T-cell (primary cell): ENCODE measurements at regions of chr19 and their contacts with region 1.

Region 1: GRCh38 chr19:18478569-18479311 is 40.8 kb upstream of the ISYNA1 start:
- DNase-seq: peak in 31 of 35 experiments; percentile 16 to 67 (median 34)
- ATAC-seq: peak; percentile 40 to 57 (median 47)
- H3K4me3 ChIP-seq: no peak overlapping the region
- H3K4me3 Mint-ChIP-seq: peak overlapping the region; percentile 34 to 73 (median 47)
- H3K27ac ChIP-seq: peak overlapping the region; percentile 75
- H3K27ac Mint-ChIP-seq: peak overlapping the region; percentile 89 to 92
- H3K4me1 ChIP-seq: peaks cover 0 to 87% of the 10 kb centered on the region in 2 experiments
- H3K4me1 Mint-ChIP-seq: peaks cover 63 to 95% (median 84%) of the 10 kb centered on the region in 3 donors
- H3K27me3 ChIP-seq: no peaks in the 10 kb centered on the region
- H3K27me3 Mint-ChIP-seq: no peaks in the 10 kb centered on the region

Region 2: GRCh38 chr19:18436671-18437490 is 41.9 kb before region 1 on chr19:
- CTCF ChIA-PET with region 1: no interaction called
- POLR2A ChIA-PET with region 1: no interaction called
- DNase-seq: peak; percentile 61 to 88 (median 75)
- ATAC-seq: peak; percentile 71 to 76 (median 74)
- H3K4me3 ChIP-seq: peak overlapping the region; percentile 49 to 69
- H3K4me3 Mint-ChIP-seq: peak overlapping the region; percentile 74 to 79 (median 78)
- H3K27ac ChIP-seq: no peak overlapping the region
- H3K27ac Mint-ChIP-seq: peak overlapping the region; percentile 16 to 36
- H3K4me1 ChIP-seq: peaks cover 2 to 68% of the 10 kb centered on the region in 2 experiments
- H3K4me1 Mint-ChIP-seq: peaks cover 30 to 46% (median 34%) of the 10 kb centered on the region in 3 donors
- H3K27me3 ChIP-seq: no peaks in the 10 kb centered on the region
- H3K27me3 Mint-ChIP-seq: no peaks in the 10 kb centered on the region

Region 3: DNA sequence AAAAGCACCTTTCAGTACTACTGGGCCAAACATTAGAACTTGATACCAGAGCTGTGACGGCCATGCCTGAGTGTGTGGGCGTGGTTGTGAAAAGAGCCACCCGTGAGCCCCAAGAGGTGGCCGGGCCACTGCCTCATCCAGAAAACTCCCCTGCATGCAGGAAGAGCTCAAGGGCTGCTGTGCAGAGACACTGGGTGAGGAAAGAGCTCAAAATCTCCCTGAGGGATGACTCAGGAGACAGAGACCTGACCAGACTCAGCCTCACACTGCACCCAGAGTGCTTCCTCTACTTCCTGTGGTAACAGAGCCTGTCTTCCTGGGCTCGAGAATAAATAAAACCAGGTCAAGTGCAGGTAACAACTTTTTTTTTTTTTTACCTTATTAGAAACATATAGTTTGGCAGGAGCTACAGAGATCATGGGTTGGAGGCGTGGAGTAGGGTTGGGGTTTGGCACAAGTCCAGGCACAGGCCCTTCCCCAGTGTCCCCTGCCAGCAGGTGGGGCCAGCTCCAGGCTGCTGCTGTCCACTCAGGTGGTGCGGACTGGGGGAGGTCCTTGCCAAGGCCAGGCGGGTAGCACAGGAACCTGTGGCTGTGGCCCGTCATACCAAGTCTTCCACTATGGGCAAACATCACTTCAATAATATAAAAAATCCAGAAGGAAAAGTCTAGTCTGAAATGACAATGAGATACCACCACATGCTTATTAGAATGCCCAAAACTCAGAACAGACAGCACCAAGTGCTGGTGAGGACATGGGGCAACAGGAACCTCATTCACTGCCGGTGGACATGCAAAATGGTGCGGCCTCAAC is 17.6 kb after region 1 on chr19:
- CTCF ChIA-PET with region 1: interaction called in 1 of 2 experiments, 5 read pairs
- POLR2A ChIA-PET with region 1: interaction called in 1 of 2 experiments, 11 read pairs
- DNase-seq: peak in 34 of 35 experiments; percentile 38 to 88 (median 60)
- ATAC-seq: peak; percentile 90 to 95 (median 92)
- H3K4me3 ChIP-seq: peak overlapping the region; percentile 26 to 27
- H3K4me3 Mint-ChIP-seq: peak overlapping the region; percentile 63 to 76 (median 65)
- H3K27ac ChIP-seq: peak overlapping the region; percentile 98
- H3K27ac Mint-ChIP-seq: peak overlapping the region; percentile 71 to 81
- H3K4me1 ChIP-seq: peaks cover 16 to 98% of the 10 kb centered on the region in 2 experiments
- H3K4me1 Mint-ChIP-seq: peaks cover 62 to 88% (median 85%) of the 10 kb centered on the region in 3 donors
- H3K27me3 ChIP-seq: no peaks in the 10 kb centered on the region
- H3K27me3 Mint-ChIP-seq: no peaks in the 10 kb centered on the region

Region 4: DNA sequence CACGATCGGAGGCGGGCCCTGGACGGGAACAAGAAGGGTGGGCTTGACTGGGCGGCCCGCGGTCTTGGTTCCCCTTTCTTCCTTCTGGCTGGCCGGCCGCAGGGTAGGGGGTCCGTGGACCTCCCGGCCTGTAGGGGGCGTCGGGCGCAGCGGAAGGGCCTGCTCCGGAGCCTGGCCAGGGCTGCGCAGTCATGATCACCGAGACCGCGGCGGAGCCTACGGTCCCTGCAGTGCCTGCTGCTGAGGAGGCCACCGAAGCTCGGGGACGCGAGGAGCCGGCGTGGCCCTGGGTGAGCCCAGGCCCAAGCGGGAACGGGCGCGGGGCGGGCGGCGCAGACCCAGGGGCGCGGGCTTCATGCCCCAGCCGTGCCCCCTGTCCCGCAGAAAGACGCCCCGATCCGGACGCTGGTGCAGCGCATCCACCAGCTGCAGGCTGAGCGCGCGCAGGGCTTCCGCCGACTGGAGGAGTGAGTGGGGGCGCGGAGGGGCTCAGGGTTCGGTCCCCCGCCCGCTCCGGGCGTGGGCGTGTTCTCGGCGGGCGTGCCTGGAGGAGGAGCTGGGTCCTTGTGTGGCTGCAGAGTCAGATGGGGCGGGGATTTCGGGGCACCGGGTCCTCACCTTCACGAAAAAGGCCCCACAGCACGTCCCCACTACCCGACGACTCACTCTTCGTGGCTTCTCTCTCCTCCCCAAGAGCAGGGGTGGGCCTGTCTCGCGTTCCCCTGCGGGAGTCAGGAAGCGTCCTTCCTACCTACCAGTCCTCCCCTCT is 110.1 kb after region 1 on chr19 and contains the start of gene REX1BD:
- CTCF ChIA-PET with region 1: no interaction called
- POLR2A ChIA-PET with region 1: interaction called in 1 of 2 experiments, 14 read pairs
- DNase-seq: peak; percentile 73 to 91 (median 86)
- ATAC-seq: peak; percentile 81 to 85 (median 82)
- H3K4me3 ChIP-seq: peak within 1 kb of the TSS; percentile 77 to 78
- H3K4me3 Mint-ChIP-seq: peak within 1 kb of the TSS; percentile 79 to 88 (median 80)
- H3K27ac ChIP-seq: peak within 1 kb of the TSS; percentile 93
- H3K27ac Mint-ChIP-seq: peak within 1 kb of the TSS; percentile 93 to 95
- H3K4me1 ChIP-seq: peaks cover 16 to 46% of the 10 kb centered on the region in 2 experiments
- H3K4me1 Mint-ChIP-seq: peaks cover 35 to 46% (median 37%) of the 10 kb centered on the region in 3 donors
- H3K27me3 ChIP-seq: no peaks in the 10 kb centered on the region
- H3K27me3 Mint-ChIP-seq: no peaks in the 10 kb centered on the region
- total RNA-seq, gene REX1BD: 91.8 to 166 (median 150) TPM

Region 5: GRCh38 chr19:18603255-18603957 is 124.7 kb after region 1 on chr19:
- CTCF ChIA-PET with region 1: no interaction called
- POLR2A ChIA-PET with region 1: no interaction called
- DNase-seq: peak in 2 of 35 experiments; percentile 19 to 45
- ATAC-seq: peak; percentile 41 to 75 (median 46)
- H3K4me3 ChIP-seq: no peak overlapping the region
- H3K4me3 Mint-ChIP-seq: peak overlapping the region in 1 of 3 donors; percentile 9
- H3K27ac ChIP-seq: no peak overlapping the region
- H3K27ac Mint-ChIP-seq: peak overlapping the region; percentile 22 to 56
- H3K4me1 ChIP-seq: peaks cover 0 to 25% of the 10 kb centered on the region in 2 experiments
- H3K4me1 Mint-ChIP-seq: peaks cover 0 to 16% (median 11%) of the 10 kb centered on the region in 3 donors
- H3K27me3 ChIP-seq: peaks cover 7 to 82% of the 10 kb centered on the region in 2 experiments
- H3K27me3 Mint-ChIP-seq: peaks cover 37 to 68% of the 10 kb centered on the region in 2 donors

Region 6: GRCh38 chr19:18780631-18781030 is 301.9 kb after region 1 on chr19:
- CTCF ChIA-PET with region 1: no interaction called
- POLR2A ChIA-PET with region 1: interaction called in 1 of 2 experiments, 12 read pairs
- DNase-seq: no peak
- ATAC-seq: no peak
- H3K4me3 ChIP-seq: no peak overlapping the region
- H3K4me3 Mint-ChIP-seq: no peak overlapping the region
- H3K27ac ChIP-seq: no peak overlapping the region
- H3K27ac Mint-ChIP-seq: no peak overlapping the region
- H3K4me1 ChIP-seq: peaks cover 0 to 12% of the 10 kb centered on the region in 2 experiments
- H3K4me1 Mint-ChIP-seq: peaks cover 4 to 8% (median 4%) of the 10 kb centered on the region in 3 donors
- H3K27me3 ChIP-seq: peaks cover 0 to 65% of the 10 kb centered on the region in 2 experiments
- H3K27me3 Mint-ChIP-seq: peaks cover 4 to 10% of the 10 kb centered on the region in 2 donors